PC-9 (cell line): ENCODE measurements at regions of chrX and their contacts with region 1.

Region 1: GRCh38 chrX:140572724-140573123 is 67.9 kb upstream of the SOX3 start:
- DNase-seq: peak in 1 of 2 experiments; percentile 5
- H3K4me3 ChIP-seq: no peak overlapping the region
- H3K27ac ChIP-seq: no peak overlapping the region
- H3K4me1 ChIP-seq: no peaks in the 10 kb centered on the region
- H3K27me3 ChIP-seq: no peaks in the 10 kb centered on the region
- CTCF ChIP-seq: peak; percentile 72

Region 2: DNA sequence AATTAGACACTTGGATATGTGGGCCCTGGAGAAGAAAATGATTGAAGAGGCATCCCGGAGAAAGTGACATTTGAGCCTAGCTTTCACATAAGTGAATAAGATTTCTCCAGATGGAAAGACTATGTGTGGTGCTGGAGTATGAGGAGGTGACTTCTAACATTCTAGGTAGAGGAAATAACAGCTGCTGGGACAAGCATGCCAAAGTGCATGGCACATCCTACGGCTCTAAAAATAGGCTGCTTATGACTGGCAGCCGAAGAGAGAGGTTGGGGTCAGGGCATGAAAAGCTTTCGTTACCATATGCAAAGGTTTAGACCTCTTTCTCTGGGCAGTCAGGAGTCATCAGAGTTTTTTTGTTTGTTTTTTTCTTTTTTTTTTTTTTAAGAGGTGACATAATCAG is 209.9 kb before region 1 on chrX:
- CTCF ChIA-PET with region 1: no interaction called
- POLR2A ChIA-PET with region 1: no interaction called
- intact Hi-C with region 1: no loop called
- DNase-seq: no peak
- H3K4me3 ChIP-seq: no peak overlapping the region
- H3K27ac ChIP-seq: no peak overlapping the region
- H3K4me1 ChIP-seq: no peaks in the 10 kb centered on the region
- H3K27me3 ChIP-seq: no peaks in the 10 kb centered on the region
- CTCF ChIP-seq: no peak

Region 3: GRCh38 chrX:140586951-140587350 is 14.2 kb after region 1 on chrX:
- CTCF ChIA-PET with region 1: no interaction called
- POLR2A ChIA-PET with region 1: no interaction called
- intact Hi-C with region 1: no loop called
- DNase-seq: no peak
- H3K4me3 ChIP-seq: no peak overlapping the region
- H3K27ac ChIP-seq: no peak overlapping the region
- H3K4me1 ChIP-seq: no peaks in the 10 kb centered on the region
- H3K27me3 ChIP-seq: no peaks in the 10 kb centered on the region
- CTCF ChIP-seq: no peak

Region 4: GRCh38 chrX:140733769-140734342 is 161.1 kb after region 1 on chrX:
- CTCF ChIA-PET with region 1: no interaction called
- POLR2A ChIA-PET with region 1: no interaction called
- intact Hi-C with region 1: loop called (anchors 1 kb)
- DNase-seq: peak in 1 of 2 experiments; percentile 19
- H3K4me3 ChIP-seq: no peak overlapping the region
- H3K27ac ChIP-seq: no peak overlapping the region
- H3K4me1 ChIP-seq: no peaks in the 10 kb centered on the region
- H3K27me3 ChIP-seq: peaks cover 11% of the 10 kb centered on the region
- CTCF ChIP-seq: peak; percentile 86